HepG2 (cell line): ENCODE measurements at regions of chr1 and their contacts with region 1.

Region 1: GRCh38 chr1:223683586-223684487 is 18.3 kb upstream of the CAPN8 start:
- DNase-seq: no peak
- ATAC-seq: peak; percentile 77
- H3K4me3 ChIP-seq: no peak overlapping the region
- H3K27ac ChIP-seq: no peak overlapping the region
- H3K4me1 ChIP-seq: no peaks in the 10 kb centered on the region
- H3K27me3 ChIP-seq: peaks cover 0 to 17% of the 10 kb centered on the region in 2 experiments; a peak in 3 of 5 replicates
- CTCF ChIP-seq: peak; percentile 83
- EP300 ChIP-seq: no peak
- POLR2A ChIP-seq: no peak
- RAD21 ChIP-seq: peak; percentile 65

Region 2: GRCh38 chr1:223133824-223134435 is 549.9 kb before region 1 on chr1:
- CTCF ChIA-PET with region 1: interaction called, 15 read pairs
- POLR2A ChIA-PET with region 1: no interaction called
- in situ Hi-C with region 1: loop called (anchors 10 kb)
- intact Hi-C with region 1: loop called (anchors 2 kb)
- DNase-seq: peak; percentile 41
- ATAC-seq: peak; percentile 88
- H3K4me3 ChIP-seq: no peak overlapping the region; a peak in 1 of 6 replicates
- H3K27ac ChIP-seq: no peak overlapping the region
- H3K4me1 ChIP-seq: no peaks in the 10 kb centered on the region
- H3K27me3 ChIP-seq: peaks cover 0 to 42% of the 10 kb centered on the region in 2 experiments; a peak in 4 of 5 replicates
- CTCF ChIP-seq: peak; percentile 91
- EP300 ChIP-seq: no peak
- POLR2A ChIP-seq: no peak
- RAD21 ChIP-seq: peak; percentile 55; the same call in 1 of the 2 replicates

Region 3: DNA sequence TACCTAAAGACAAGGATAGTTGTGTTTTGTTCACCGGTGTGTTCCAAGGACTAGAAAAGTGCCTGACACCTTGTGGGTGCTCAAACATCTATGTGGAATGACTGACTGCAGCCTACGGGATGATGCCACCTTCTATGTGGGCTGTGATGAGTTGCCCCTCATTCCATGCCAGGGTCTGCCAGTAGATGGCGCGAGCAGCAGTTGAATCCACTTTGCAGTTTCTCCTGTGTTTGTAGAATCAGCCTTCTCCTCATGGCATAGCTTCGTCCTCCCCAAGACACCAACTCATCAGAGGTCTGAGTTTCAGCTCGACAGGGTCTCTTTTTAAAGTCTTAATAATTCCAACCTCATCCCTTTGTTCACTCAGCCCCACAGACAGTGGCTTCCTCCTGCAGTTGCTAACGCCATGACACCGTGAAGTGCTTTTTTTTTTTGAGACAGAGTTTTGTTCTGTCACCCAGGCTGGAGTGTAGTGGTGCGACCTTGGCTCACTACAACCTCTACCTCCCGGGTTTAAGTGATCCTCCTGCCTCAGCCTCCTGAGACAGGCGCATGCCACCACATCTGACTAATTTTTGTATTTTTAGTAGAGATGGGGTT is 152.0 kb before region 1 on chr1:
- CTCF ChIA-PET with region 1: interaction called, 15 read pairs
- POLR2A ChIA-PET with region 1: no interaction called
- in situ Hi-C with region 1: no loop called
- intact Hi-C with region 1: loop called (anchors 1 kb)
- DNase-seq: peak; percentile 41
- ATAC-seq: peak; percentile 86
- H3K4me3 ChIP-seq: no peak overlapping the region
- H3K27ac ChIP-seq: no peak overlapping the region
- H3K4me1 ChIP-seq: no peaks in the 10 kb centered on the region
- H3K27me3 ChIP-seq: 0 out of 5 replicates have a peak, but pooled peaks cover 0 to 10% of the 10 kb centered on the region in 2 experiments
- CTCF ChIP-seq: peak; percentile 75
- EP300 ChIP-seq: no peak
- POLR2A ChIP-seq: no peak
- RAD21 ChIP-seq: 0 out of 2 replicates have a peak, but pooled peaks have one; percentile 39

Region 4: GRCh38 chr1:223556414-223557129 is 127.3 kb before region 1 on chr1:
- CTCF ChIA-PET with region 1: interaction called, 34 read pairs
- POLR2A ChIA-PET with region 1: no interaction called
- in situ Hi-C with region 1: no loop called
- intact Hi-C with region 1: no loop called
- DNase-seq: peak; percentile 25
- ATAC-seq: peak; percentile 98
- H3K4me3 ChIP-seq: no peak overlapping the region
- H3K27ac ChIP-seq: no peak overlapping the region
- H3K4me1 ChIP-seq: no peaks in the 10 kb centered on the region
- H3K27me3 ChIP-seq: no peaks in the 10 kb centered on the region
- CTCF ChIP-seq: peak; percentile 91
- EP300 ChIP-seq: no peak
- POLR2A ChIP-seq: no peak
- RAD21 ChIP-seq: peak; percentile 88